Endothelial cell of umbilical vein (primary cell): ENCODE measurements at regions of chr1 and their contacts with region 1.

Region 1: GRCh38 chr1:15937706-15938168 is 38.2 kb downstream of the ZBTB17 start:
- DNase-seq: peak; percentile 75
- H3K4me3 ChIP-seq: no peak overlapping the region
- H3K27ac ChIP-seq: peak overlapping the region; percentile 72
- H3K4me1 ChIP-seq: peaks cover 26% of the 10 kb centered on the region
- H3K27me3 ChIP-seq: no peaks in the 10 kb centered on the region
- CTCF ChIP-seq: peak in 1 of 2 donors; percentile 46
- POLR2A ChIP-seq: no peak

Region 2: DNA sequence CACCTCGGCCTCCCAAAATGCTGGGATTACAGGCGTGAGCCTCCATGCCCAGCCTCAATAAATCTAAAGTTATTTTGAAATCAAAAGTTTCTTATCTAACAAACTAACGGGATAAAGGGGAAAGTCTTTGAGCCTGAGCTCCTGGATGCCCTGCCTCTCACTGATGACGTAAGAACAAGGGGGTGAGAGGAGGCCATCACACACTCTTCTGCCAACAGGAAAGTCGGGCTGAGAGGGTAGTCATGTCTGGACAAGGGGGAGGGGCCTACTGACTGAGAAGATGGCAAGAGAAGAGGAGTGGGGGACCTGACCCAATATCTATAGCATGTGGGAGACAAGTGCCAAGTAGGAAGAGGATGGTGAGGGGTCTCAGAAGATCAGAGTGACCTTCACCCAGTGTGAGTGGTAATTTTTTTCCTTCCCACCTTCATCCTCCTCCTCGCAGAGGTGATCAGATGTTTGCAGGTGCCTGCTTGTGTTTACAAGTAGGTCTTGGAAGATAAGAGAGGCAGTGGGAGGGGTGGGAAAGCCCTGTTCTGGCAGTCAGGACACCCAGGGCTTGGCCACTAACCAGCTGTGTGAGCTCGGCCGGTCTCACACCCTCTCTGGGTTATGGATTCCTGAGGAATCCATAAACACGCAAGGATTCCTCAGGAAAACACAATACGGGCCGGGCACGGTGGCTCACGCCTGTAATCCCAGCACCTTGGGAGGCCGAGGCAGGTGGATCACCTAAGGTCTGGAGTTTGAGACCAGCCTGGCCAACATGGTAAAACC is 139.9 kb before region 1 on chr1:
- CTCF ChIA-PET with region 1: interaction called, 4 read pairs
- POLR2A ChIA-PET with region 1: interaction called, 7 read pairs
- dilution Hi-C with region 1: no loop called
- intact Hi-C with region 1: loop called (anchors 2 kb)
- DNase-seq: peak; percentile 30
- H3K4me3 ChIP-seq: no peak overlapping the region
- H3K27ac ChIP-seq: peak overlapping the region; percentile 88
- H3K4me1 ChIP-seq: peaks cover 56% of the 10 kb centered on the region
- H3K27me3 ChIP-seq: no peaks in the 10 kb centered on the region
- CTCF ChIP-seq: no peak
- POLR2A ChIP-seq: no peak

Region 3: GRCh38 chr1:15835741-15836510 is 101.8 kb before region 1 on chr1:
- CTCF ChIA-PET with region 1: interaction called, 4 read pairs
- POLR2A ChIA-PET with region 1: no interaction called
- dilution Hi-C with region 1: no loop called
- intact Hi-C with region 1: loop called (anchors 2 kb)
- DNase-seq: peak; percentile 100
- H3K4me3 ChIP-seq: peak overlapping the region in 2 of 3 experiments; percentile 58 to 66
- H3K27ac ChIP-seq: peak overlapping the region; percentile 95
- H3K4me1 ChIP-seq: peaks cover 3% of the 10 kb centered on the region
- H3K27me3 ChIP-seq: no peaks in the 10 kb centered on the region
- CTCF ChIP-seq: no peak
- POLR2A ChIP-seq: peak; percentile 85

Region 4: GRCh38 chr1:15949453-15950245 is 11.9 kb after region 1 on chr1:
- CTCF ChIA-PET with region 1: interaction called, 15 read pairs
- POLR2A ChIA-PET with region 1: interaction called, 3 read pairs
- dilution Hi-C with region 1: no loop called
- intact Hi-C with region 1: loop called (anchors 1 kb)
- DNase-seq: peak; percentile 92
- H3K4me3 ChIP-seq: no peak overlapping the region
- H3K27ac ChIP-seq: peak overlapping the region; percentile 75
- H3K4me1 ChIP-seq: peaks cover 60% of the 10 kb centered on the region
- H3K27me3 ChIP-seq: no peaks in the 10 kb centered on the region
- CTCF ChIP-seq: no peak
- POLR2A ChIP-seq: no peak

Region 5: GRCh38 chr1:15957228-15958095 is 19.7 kb after region 1 on chr1:
- CTCF ChIA-PET with region 1: interaction called, 17 read pairs
- POLR2A ChIA-PET with region 1: interaction called, 3 read pairs
- dilution Hi-C with region 1: no loop called
- intact Hi-C with region 1: no loop called
- DNase-seq: no peak
- H3K4me3 ChIP-seq: no peak overlapping the region
- H3K27ac ChIP-seq: peak overlapping the region; percentile 48
- H3K4me1 ChIP-seq: peaks cover 49% of the 10 kb centered on the region
- H3K27me3 ChIP-seq: no peaks in the 10 kb centered on the region
- CTCF ChIP-seq: peak in 1 of 2 donors; percentile 38
- POLR2A ChIP-seq: no peak

Region 6: DNA sequence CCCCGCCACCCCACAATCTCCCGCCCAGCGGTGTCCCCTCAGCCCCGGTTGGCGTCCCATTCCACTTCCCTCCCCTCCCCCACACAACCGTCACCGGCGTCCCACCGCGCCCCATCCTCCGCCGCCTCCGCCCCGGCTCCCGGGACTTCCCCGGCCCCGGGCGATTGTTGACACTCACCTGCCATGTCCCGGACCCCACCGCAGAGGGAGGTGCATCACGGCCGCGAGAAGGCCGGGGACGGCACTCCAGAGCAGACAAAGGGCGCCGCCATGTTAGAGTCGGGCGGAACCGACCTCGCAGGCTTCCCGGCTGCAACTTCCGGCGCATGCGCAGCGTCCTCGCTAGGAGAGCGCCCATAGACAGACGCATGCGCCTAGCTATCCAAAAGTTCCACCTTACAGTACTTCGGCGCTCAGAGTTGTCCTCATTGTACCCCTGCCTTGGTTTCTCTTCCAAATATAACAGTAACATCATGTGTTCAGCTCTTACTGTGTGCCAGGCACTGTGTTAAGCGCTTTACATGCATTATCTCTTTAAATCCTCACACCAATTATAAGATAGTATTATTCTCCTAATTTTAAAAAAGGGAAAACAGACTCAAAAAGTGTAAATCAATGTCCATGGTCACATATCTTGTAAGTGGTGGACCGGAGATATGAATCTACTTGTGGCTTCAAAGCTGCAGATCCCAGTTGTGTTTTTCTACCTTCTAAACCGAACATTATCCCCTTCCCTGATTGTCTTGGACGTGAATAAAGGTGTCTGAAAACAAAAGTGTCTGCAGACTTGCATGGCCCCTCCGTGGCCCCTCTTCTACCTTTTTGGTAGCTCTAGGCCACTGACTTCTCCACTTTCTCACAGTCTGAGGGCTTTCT is 38.3 kb after region 1 on chr1 and contains the start of gene ZBTB17:
- CTCF ChIA-PET with region 1: interaction called, 12 read pairs
- POLR2A ChIA-PET with region 1: no interaction called
- dilution Hi-C with region 1: no loop called
- intact Hi-C with region 1: loop called (anchors 2 kb)
- DNase-seq: peak; percentile 92
- H3K4me3 ChIP-seq: peak within 1 kb of the TSS; percentile 61 to 92 (median 88)
- H3K27ac ChIP-seq: peak within 1 kb of the TSS; percentile 57
- H3K4me1 ChIP-seq: peaks cover 7% of the 10 kb centered on the region
- H3K27me3 ChIP-seq: no peaks in the 10 kb centered on the region
- CTCF ChIP-seq: no peak
- POLR2A ChIP-seq: peak; percentile 54
- total RNA-seq, gene ZBTB17: 38.5 and 43.9 TPM in 2 replicates

Region 7: GRCh38 chr1:15994590-15995351 is 57.0 kb after region 1 on chr1:
- CTCF ChIA-PET with region 1: interaction called, 4 read pairs
- POLR2A ChIA-PET with region 1: no interaction called
- dilution Hi-C with region 1: no loop called
- intact Hi-C with region 1: loop called (anchors 1 kb)
- DNase-seq: peak; percentile 71
- H3K4me3 ChIP-seq: no peak overlapping the region
- H3K27ac ChIP-seq: no peak overlapping the region
- H3K4me1 ChIP-seq: no peaks in the 10 kb centered on the region
- H3K27me3 ChIP-seq: peaks cover 0 to 2% of the 10 kb centered on the region in 2 experiments
- CTCF ChIP-seq: peak; percentile 88 to 96
- POLR2A ChIP-seq: no peak